GM10248 (cell line): ENCODE measurements at regions of chrX and their contacts with region 1.

Region 1: GRCh38 chrX:120262859-120263708 is 12.5 kb downstream of the ZBTB33 start:
- DNase-seq: no peak
- CTCF ChIP-seq: no peak

Region 2: DNA sequence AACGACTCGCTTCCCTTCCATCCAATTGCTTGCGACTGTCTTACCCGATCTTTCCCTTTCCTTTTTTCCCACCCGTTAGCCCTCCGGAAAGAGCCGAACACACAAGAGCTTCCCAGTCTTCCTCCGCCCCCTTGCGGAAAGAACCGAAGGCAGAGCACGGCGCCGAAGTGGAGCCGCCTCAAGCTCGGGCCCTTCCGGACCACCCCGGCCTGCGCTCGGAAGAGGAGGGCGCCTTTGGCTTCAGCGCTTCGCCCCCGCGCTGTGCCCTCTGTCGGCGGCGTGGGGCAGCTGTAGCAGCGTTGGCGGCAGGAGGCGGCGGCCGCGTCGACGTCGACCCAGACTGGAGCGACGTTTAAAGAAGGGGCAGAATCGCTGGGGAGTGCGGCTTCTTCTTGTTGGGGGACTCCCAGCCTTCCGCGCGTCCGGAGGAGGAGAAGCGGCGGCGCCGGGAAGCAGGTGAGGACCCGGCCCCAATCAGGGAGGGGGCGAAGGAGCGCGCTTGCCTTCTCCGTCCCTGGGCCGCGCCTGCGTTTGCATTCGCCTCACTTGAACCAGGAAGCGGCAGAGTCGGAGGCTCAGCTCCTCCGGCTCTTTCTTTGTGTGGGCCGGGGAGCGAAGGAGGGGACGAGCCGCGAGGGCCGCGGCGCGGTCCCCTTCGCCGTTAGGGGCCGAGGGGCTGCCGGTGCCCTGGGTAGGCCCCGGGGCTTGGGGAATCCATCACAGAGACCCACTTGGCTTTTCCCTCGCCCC is 12.4 kb before region 1 on chrX and contains the start of gene ZBTB33:
- CTCF ChIA-PET with region 1: interaction called, 12 read pairs
- POLR2A ChIA-PET with region 1: no interaction called
- DNase-seq: peak; percentile 86
- CTCF ChIP-seq: peak; percentile 59

Region 3: DNA sequence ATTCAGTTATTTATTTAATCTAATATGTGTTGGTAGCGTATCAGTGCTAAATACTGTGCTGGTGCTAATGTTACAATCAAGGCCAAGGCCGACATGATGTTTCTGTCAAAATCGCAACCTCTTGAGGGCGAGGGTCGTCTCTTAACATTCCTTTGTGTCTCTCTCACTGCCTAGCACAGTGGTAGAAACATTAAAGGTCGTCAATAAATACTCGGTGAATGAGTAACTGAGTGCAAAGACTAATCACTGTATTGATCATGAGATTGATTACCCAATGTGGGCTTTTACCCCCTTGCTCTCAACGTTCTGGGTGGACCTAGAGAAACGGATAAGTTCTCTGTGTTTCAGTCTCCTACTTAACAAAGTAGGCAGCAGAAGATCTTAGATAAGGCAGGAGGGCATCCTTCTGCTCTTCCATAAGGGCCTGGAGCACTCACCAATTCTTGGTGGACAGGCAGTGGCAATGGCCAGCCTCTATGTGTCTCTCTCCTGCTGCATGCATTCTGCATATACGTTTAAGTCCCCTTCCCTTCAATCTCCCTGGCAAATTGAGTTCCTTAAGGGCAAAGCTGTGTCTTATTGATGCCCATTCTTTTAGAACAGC is 18.0 kb after region 1 on chrX:
- CTCF ChIA-PET with region 1: no interaction called
- POLR2A ChIA-PET with region 1: no interaction called
- DNase-seq: no peak
- CTCF ChIP-seq: no peak